Right ventricle myocardium inferior (tissue), 1 donor: ENCODE measurements at regions of chr11 and their contacts with region 1.

Region 1: GRCh38 chr11:1908618-1909017 is 10.9 kb upstream of the TNNT3 start:
- DNase-seq: peak; percentile 11
- ATAC-seq: peak; percentile 36

Region 2: GRCh38 chr11:1863352-1864216 is 45.0 kb before region 1 on chr11:
- intact Hi-C with region 1: no loop called
- DNase-seq: peak; percentile 91
- ATAC-seq: peak; percentile 26

Region 3: DNA sequence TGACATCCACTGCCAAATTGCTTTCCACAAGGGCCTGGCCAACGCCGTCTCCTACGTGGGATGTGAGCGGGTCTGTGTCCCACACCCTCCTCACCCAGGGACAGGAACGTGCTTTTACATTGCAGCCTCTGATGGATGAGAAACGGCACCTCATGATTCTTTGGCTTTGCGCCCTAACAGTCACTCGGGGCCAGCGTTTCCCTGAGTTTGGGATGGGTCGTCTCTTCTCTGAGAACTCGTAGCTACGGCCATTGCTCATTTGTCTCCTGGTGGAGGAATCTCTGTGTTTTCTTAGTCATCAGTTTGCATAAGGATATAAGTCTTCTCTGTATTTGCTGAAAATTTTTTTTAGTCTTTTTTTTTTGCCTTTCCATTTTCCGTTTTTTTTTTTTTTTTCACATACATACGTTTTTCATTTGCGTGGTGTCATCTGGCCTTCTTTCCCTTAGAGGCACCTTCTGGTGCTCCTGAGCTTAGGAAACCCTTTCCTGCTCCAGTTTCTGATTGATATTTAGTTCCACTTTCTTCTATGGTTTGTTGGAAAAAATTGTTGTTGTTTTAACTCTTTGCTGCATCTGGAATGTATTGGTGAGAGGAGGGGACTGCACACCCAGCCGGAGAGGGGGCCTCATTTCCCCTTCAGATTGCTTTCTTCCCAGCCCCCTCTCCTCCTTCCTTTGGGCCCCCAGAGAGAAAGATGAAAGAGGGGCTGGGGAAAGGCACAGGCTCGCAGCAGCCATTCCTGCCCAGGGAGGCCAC is 22.9 kb after region 1 on chr11:
- intact Hi-C with region 1: loop called (anchors 1 kb)
- DNase-seq: peak; percentile 63
- ATAC-seq: peak; percentile 24